ENCODE measurements at regions of chr17 and their contacts with region 1.

Region 1: DNA sequence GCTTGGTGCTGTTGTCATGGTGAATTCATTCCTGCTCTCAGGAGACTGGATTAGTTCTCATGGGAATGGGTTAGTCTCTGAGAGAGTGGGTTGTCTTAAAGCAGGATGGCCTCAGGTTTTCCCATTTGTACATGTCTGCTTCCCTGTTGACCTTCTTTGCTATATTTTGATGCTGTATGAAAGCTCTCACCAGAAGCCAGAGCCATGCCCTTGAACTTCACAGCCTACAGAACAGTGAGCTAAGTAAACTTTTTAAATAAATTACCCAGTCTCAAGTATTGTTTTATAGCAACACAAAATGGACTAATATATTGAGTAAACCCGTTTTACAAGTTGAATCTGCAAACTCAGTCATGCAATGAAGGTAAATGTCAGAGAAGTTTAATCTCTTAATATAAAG is 66.8 kb downstream of the CDRT15 start:
- DNase-seq: no peak

Region 2: GRCh38 chr17:13981881-13982280 is 188.0 kb before region 1 on chr17:
- intact Hi-C with region 1: no loop called
- DNase-seq: no peak

Region 3: GRCh38 chr17:14321476-14321949 is 151.6 kb after region 1 on chr17:
- intact Hi-C with region 1: loop called in 1 of 2 experiments (anchors 10 kb)
- DNase-seq: no peak

Measured in posterior vena cava (tissue), 2 donors.